GM12878 (cell line): ENCODE measurements at regions of chr10 and their contacts with region 1.

Region 1: DNA sequence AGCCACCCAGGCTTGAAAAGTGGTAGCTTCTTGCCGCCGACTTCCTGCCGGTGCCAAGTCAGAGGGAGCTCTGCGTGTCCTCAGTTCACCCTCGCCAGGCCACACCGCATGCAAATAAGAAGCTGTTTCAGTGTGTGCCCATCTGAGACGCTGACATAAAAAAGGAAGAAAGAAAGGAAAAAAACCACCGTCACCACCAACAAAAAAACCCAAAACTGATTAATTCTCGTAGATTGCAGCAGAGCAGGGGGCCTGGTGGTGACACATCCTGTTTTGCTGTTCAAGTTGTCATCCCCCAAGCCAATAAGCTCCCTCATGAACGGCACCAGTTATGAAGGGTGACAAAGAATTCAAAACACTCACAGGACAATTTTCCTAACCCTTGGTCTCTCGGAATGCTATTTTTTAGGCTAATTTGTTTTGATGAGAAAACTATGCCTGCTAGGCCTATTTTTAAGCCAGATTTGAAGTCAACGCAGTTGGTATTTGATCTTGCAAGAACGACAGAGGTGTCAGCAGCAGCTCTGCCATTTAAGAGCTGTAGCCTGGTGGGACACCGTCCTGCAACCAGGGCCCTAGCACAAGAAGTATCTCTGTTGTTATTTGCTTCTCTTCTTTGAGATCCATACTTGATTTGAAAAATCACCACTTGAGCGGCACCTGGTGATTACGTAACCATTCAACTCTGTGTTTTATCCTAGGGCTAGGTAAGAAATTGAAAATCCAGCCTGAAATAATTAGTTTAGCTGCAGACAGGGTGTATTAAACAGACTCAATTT is 145.6 kb downstream of the PFKFB3 start:
- DNase-seq: peak; percentile 93
- ATAC-seq: peak; percentile 95
- H3K4me3 ChIP-seq: peak overlapping the region; percentile 27; the same call in 1 of the 2 replicates
- H3K27ac ChIP-seq: peak overlapping the region; percentile 23
- H3K4me1 ChIP-seq: peaks cover 26% of the 10 kb centered on the region
- H3K27me3 ChIP-seq: no peaks in the 10 kb centered on the region
- CTCF ChIP-seq: no peak
- EP300 ChIP-seq: peak; percentile 96 to 97; a peak in 3 of 4 replicates
- POLR2A ChIP-seq: no peak
- RAD21 ChIP-seq: 0 out of 2 replicates have a peak, but pooled peaks have one; percentile 23

Region 2: GRCh38 chr10:6269953-6270867 is 78.1 kb before region 1 on chr10:
- CTCF ChIA-PET with region 1: interaction called, 8 read pairs
- POLR2A ChIA-PET with region 1: interaction called, 9 read pairs
- RAD21 ChIA-PET with region 1: interaction called, 14 read pairs
- SMC1A ChIA-PET with region 1: interaction called, 22 read pairs
- in situ Hi-C with region 1: no loop called
- intact Hi-C with region 1: loop called (anchors 1 kb)
- DNase-seq: peak; percentile 55
- ATAC-seq: peak; percentile 80
- H3K4me3 ChIP-seq: no peak overlapping the region
- H3K27ac ChIP-seq: peak overlapping the region; percentile 50
- H3K4me1 ChIP-seq: peaks cover 40% of the 10 kb centered on the region
- H3K27me3 ChIP-seq: no peaks in the 10 kb centered on the region
- CTCF ChIP-seq: no peak
- EP300 ChIP-seq: peak; percentile 98; a peak in 3 of 4 replicates
- POLR2A ChIP-seq: no peak
- RAD21 ChIP-seq: 0 out of 2 replicates have a peak, but pooled peaks have one; percentile 25

Region 3: GRCh38 chr10:6275022-6275997 is 73.0 kb before region 1 on chr10:
- CTCF ChIA-PET with region 1: interaction called, 5 read pairs
- POLR2A ChIA-PET with region 1: interaction called, 9 read pairs
- RAD21 ChIA-PET with region 1: interaction called, 14 read pairs
- SMC1A ChIA-PET with region 1: interaction called, 22 read pairs
- in situ Hi-C with region 1: no loop called
- intact Hi-C with region 1: loop called (anchors 1 kb)
- DNase-seq: peak; percentile 49
- ATAC-seq: peak; percentile 77
- H3K4me3 ChIP-seq: peak overlapping the region; percentile 10; the same call in 1 of the 2 replicates
- H3K27ac ChIP-seq: peak overlapping the region; percentile 51
- H3K4me1 ChIP-seq: peaks cover 28% of the 10 kb centered on the region
- H3K27me3 ChIP-seq: peaks cover 0 to 1% of the 10 kb centered on the region in 2 experiments; a peak in 1 of 4 replicates
- CTCF ChIP-seq: 0 out of 6 replicates have a peak, but pooled peaks of 1 of the 3 experiments have one; percentile 2
- EP300 ChIP-seq: 0 out of 4 replicates have a peak, but pooled peaks have one; percentile 51 to 52
- POLR2A ChIP-seq: peak; percentile 77
- RAD21 ChIP-seq: peak; percentile 10; the same call in 1 of the 2 replicates

Region 4: GRCh38 chr10:6314620-6315205 is 33.6 kb before region 1 on chr10:
- CTCF ChIA-PET with region 1: interaction called, 4 read pairs
- POLR2A ChIA-PET with region 1: interaction called, 7 read pairs
- RAD21 ChIA-PET with region 1: interaction called, 10 read pairs
- SMC1A ChIA-PET with region 1: interaction called, 20 read pairs
- in situ Hi-C with region 1: no loop called
- intact Hi-C with region 1: no loop called
- DNase-seq: no peak
- ATAC-seq: no peak
- H3K4me3 ChIP-seq: no peak overlapping the region
- H3K27ac ChIP-seq: no peak overlapping the region
- H3K4me1 ChIP-seq: no peaks in the 10 kb centered on the region
- H3K27me3 ChIP-seq: 0 out of 4 replicates have a peak, but pooled peaks cover 0 to 4% of the 10 kb centered on the region in 2 experiments
- CTCF ChIP-seq: no peak
- EP300 ChIP-seq: no peak
- POLR2A ChIP-seq: no peak
- RAD21 ChIP-seq: no peak

Region 5: DNA sequence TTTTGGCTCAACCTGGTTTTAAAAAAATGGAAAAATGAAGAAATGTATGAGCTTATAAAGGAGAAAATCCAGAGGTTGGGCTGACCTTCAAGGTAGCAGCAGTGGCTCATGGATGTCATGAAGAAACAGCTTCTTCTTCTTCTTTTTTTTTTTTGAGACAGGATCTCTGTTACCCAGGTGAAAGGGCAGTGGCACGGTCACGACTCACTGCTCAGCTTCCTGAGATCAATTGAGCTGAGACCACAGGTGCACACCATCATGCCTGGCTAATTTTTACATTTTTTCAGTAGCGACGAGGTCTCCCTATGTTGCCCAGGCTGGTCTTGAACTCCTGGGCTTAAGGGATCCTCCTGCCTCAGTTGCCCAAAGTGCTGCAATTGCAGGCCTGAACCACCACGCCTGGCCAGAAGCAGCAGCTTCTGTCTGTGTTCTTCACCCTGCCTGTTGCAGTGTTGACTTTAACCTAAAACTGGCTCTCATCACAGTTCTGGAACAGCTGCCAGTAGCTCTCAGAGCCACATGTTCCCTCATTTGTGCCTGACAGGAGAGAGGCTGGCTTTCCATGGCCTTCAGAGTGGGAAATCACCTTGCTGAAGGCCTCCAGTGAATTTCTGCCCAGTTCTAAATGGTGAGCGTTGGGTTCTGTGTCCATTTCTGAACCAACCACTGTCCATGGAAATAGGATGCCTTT is 27.8 kb before region 1 on chr10:
- CTCF ChIA-PET with region 1: interaction called, 4 read pairs
- POLR2A ChIA-PET with region 1: interaction called, 4 read pairs
- RAD21 ChIA-PET with region 1: interaction called, 10 read pairs
- SMC1A ChIA-PET with region 1: interaction called, 20 read pairs
- in situ Hi-C with region 1: no loop called
- intact Hi-C with region 1: no loop called
- DNase-seq: peak; percentile 45
- ATAC-seq: peak; percentile 98
- H3K4me3 ChIP-seq: no peak overlapping the region
- H3K27ac ChIP-seq: no peak overlapping the region
- H3K4me1 ChIP-seq: peaks cover 6% of the 10 kb centered on the region
- H3K27me3 ChIP-seq: no peaks in the 10 kb centered on the region
- CTCF ChIP-seq: no peak
- EP300 ChIP-seq: no peak
- POLR2A ChIP-seq: no peak
- RAD21 ChIP-seq: no peak

Region 6: DNA sequence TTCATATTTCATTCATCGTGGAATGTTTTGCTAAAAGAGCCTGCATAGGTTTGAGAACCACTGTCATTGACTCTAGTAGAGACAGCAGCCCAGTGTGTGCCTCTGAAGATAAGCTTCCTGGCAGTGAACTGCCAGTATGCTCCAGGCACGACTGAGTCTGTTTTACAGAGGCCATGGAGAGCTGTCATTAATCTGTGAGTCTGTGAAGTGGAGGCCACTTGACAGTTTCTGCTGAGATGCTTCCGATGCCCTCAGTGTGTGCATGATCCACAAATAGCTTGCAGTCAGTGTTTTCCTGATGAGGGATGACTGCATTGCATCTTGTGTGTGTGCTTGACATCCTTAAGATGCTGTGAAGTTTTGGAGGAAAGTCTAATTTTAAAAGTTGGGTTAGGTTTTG is 16.6 kb after region 1 on chr10:
- CTCF ChIA-PET with region 1: interaction called, 10 read pairs
- POLR2A ChIA-PET with region 1: interaction called, 3 read pairs
- RAD21 ChIA-PET with region 1: interaction called, 3 read pairs
- SMC1A ChIA-PET with region 1: interaction called, 10 read pairs
- in situ Hi-C with region 1: no loop called
- intact Hi-C with region 1: no loop called
- DNase-seq: no peak
- ATAC-seq: no peak
- H3K4me3 ChIP-seq: no peak overlapping the region
- H3K27ac ChIP-seq: no peak overlapping the region
- H3K4me1 ChIP-seq: no peaks in the 10 kb centered on the region
- H3K27me3 ChIP-seq: no peaks in the 10 kb centered on the region; a peak in 2 of 4 replicates
- CTCF ChIP-seq: no peak
- EP300 ChIP-seq: no peak
- POLR2A ChIP-seq: no peak
- RAD21 ChIP-seq: no peak

Region 7: DNA sequence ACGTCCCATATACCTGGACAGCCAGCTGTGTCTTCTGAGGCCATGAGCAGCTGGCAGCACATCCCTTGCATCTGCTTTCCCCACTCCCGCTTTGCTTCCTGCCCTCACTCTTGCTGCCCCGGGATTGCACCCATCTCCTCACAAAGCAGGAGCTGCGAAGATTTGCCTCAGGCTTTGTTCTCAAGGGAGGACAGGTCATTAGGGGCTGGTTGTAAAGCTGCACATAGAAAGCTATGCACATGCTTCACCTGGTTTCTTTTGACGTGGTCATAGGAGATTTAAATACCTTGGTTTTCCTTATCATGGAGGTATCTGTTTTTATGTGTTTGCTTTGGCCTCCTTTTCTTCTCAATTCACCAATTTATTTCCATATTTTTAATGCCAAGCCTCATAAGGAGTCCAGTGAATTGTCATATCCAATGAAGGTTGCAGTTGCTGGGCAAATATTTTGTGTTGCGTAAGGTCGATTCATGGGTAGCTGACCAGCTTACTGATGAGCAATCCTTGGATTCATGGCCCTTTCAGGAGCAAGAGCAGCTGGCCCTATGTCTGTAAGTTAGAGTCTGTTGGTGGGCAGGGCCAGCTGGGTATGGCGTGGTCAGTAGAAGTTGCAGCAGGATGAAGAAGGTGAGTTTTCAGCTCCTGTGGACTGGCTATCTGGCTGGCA is 37.2 kb after region 1 on chr10:
- CTCF ChIA-PET with region 1: no interaction called
- POLR2A ChIA-PET with region 1: interaction called, 8 read pairs
- RAD21 ChIA-PET with region 1: interaction called, 3 read pairs
- SMC1A ChIA-PET with region 1: interaction called, 12 read pairs
- in situ Hi-C with region 1: no loop called
- intact Hi-C with region 1: no loop called
- DNase-seq: no peak
- ATAC-seq: no peak
- H3K4me3 ChIP-seq: no peak overlapping the region
- H3K27ac ChIP-seq: no peak overlapping the region
- H3K4me1 ChIP-seq: no peaks in the 10 kb centered on the region
- H3K27me3 ChIP-seq: peaks cover 0 to 3% of the 10 kb centered on the region in 2 experiments; a peak in 1 of 4 replicates
- CTCF ChIP-seq: no peak
- EP300 ChIP-seq: no peak
- POLR2A ChIP-seq: no peak
- RAD21 ChIP-seq: no peak